Right cardiac atrium (tissue), 5 donors: ENCODE measurements at regions of chr14 and their contacts with region 1.

Region 1: DNA sequence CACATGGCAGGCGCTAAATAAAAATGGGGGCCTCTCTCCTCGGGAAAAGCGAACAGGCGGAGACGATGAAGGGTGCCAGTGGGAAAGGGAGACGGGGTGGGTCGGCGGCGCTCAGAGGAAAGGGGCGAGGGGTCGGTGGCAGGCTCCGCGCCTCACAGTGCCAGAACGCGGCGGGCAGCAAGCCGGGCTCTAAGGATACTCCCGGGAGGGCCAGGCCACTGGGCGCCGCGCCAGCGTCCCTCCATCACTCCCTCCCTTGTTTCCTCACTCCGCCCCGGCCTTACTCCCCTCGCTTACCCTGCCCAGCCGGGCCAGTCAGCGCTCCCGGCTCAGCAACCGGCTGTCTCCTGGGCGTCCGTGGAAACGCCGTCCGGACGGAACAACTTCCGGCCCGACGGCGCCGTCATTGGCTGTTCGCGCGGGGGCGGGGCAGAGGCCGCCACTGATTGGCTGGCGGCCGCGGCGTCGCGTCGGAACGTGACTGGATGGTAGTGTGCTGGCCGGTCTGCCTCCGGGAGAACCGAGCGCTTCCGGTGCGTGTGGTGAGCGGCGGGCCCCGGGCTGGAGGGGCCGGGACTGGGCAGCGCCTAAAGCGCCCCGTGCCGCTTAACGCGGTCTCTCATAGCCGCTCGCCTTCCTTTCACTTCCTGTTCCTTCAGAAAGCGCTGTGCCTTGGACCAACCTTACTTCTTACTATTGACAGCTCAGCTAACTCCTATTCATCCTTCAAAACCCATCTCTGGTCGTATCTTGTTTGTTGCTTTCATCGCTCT is 53.0 kb downstream of the SLC25A47 start:
- DNase-seq: peak; percentile 96 to 98 (median 98)
- ATAC-seq: peak; percentile 95 to 97
- H3K4me3 ChIP-seq: peak within 1 kb of the TSS; percentile 68
- H3K27ac ChIP-seq: peak within 1 kb of the TSS; percentile 93
- H3K4me1 ChIP-seq: no peaks in the 10 kb centered on the region
- H3K27me3 ChIP-seq: no peaks in the 10 kb centered on the region

Region 2: DNA sequence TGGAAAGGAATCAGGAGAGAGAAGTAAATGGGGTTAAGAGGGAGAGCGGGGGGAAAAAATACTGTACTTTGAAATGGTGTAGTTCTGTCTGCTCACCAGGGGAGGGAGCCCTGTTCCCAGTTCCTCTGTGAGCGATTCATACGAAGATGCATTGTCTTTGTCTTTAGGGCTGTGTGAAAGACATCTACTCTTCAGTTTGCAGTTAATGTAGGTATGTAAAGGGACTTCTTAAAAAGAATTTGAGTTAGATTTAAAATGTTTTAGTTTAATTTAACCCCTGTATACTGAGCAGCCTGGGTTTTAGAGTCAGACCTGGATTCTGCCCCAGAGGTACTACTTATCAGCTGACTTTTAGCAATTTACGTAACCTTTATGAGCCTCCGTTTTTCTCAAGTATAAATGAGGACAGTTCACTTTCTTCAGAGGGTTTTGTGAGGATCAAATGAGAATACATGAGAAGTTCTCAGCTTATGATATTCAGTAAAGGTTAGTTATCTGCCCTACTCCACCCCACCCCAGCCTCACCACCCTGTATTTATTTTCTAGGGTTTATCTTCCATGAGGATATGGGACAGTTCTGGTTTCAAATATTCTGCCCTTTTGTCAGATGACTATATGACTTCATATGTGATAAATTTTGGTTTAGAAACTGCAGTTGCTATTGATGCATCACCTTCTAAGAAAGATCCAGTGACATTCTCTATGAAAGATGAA is 393.5 kb before region 1 on chr14:
- intact Hi-C with region 1: loop called in 1 of 4 experiments (anchors 5 kb)
- DNase-seq: peak in 2 of 3 donors; percentile 45 to 53
- ATAC-seq: peak; percentile 88 to 89
- H3K4me3 ChIP-seq: no peak overlapping the region
- H3K27ac ChIP-seq: no peak overlapping the region
- H3K4me1 ChIP-seq: no peaks in the 10 kb centered on the region
- H3K27me3 ChIP-seq: no peaks in the 10 kb centered on the region

Region 3: DNA sequence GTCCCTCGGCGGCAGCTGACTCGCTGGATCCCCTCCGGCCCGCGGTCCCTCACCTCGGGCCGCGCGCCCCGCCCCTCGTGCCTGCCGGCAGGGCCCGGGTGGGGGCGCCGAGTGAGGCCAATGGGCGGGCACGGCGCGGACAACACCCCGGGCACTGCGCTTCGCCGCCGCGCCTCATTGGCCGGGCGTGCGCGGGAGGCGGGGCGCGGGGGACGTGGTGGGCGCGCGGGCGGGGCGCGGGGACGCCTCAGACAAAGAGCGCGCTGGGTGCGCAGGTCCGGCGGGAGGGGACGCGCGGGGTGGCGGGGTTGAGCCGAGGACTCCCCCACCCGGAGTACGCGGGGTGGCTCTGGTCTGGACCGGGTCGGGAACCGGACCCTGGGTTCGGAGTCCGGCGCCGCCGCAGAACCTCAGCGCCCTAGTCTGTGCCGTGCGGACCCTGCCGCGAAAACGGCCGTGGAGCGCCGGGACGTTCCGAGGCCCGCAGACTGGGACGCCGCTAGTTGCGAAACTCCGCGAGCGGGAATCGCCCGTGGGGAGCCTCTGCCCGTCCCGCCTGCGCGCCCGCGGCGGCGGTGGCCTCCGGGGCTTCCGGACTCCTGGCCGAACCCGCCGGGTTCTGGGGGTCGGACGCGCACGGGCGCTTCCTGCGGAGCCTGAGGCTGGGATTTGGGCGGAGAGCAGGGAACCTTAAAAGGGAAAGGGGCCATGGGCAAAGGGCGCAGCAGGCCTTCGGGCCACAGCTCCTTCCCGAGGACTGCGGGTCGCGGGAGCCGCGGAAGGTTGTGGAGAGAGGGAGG is 69.5 kb before region 1 on chr14 and contains the start of gene SLC25A29:
- intact Hi-C with region 1: loop called in 3 of 4 experiments (anchors 5 to 10 kb)
- DNase-seq: peak; percentile 90 to 97 (median 96)
- ATAC-seq: peak; percentile 88 to 92
- H3K4me3 ChIP-seq: peak within 1 kb of the TSS; percentile 92
- H3K27ac ChIP-seq: peak within 1 kb of the TSS; percentile 91
- H3K4me1 ChIP-seq: no peaks in the 10 kb centered on the region
- H3K27me3 ChIP-seq: no peaks in the 10 kb centered on the region
- total RNA-seq, gene SLC25A29: 22.9 to 41.1 (median 23.9) TPM